Cardiac septum (tissue), 1 donor: ENCODE measurements at regions of chr9 and their contacts with region 1.

Region 1: GRCh38 chr9:35324966-35325365 is 163.2 kb downstream of the UNC13B start:
- DNase-seq: no peak

Region 2: DNA sequence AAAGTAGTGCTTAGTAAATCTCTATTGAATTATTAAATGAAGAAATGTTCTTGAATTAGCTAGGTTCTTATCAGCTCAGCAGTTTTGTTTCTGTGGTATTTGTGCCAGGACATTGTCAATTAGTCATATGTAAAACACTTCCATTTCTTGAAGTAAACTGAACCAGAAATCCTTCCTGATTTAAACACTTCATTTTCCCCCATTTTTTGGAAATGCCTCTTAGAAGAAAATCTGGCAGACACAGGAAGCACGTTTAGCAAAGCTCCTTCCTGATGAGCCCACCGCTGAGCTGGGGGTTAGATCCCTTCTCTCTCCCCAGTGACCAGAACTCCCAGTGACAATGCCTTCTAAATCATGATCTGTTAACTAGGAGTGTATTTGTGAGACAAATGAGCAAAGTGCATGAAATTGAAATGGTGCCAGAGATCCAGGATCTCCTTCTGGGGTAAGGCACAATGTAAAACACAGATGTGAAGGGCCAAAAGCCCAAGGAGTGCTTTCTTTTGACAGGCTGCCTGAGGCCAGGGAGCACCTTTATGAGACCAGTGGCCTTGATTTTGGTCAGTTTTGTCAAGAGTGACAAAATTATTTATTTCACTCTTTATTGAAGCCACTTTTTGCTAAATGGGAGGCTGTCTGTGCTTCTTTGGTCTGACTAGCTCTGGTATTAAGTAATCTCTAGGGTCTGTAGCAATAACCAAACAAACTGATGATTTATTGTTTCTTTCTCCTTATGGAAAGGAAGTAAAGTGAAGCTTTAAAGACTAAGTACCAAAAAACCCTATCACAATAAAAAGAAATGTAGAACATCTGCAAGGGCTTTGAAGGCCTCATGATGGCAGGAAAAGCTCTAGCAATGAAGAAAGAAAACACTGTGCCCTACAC is 139.4 kb after region 1 on chr9:
- intact Hi-C with region 1: loop called (anchors 5 kb)
- DNase-seq: no peak